B cell (primary cell): ENCODE measurements at regions of chr1 and their contacts with region 1.

Region 1: GRCh38 chr1:192580351-192580962 is 4.9 kb downstream of the RGS1 start:
- DNase-seq: peak; percentile 55
- ATAC-seq: no peak
- H3K4me3 ChIP-seq: no peak overlapping the region
- H3K4me3 Mint-ChIP-seq: peak overlapping the region; percentile 73
- H3K27ac ChIP-seq: no peak overlapping the region
- H3K27ac Mint-ChIP-seq: no peak overlapping the region
- H3K4me1 ChIP-seq: peaks cover 11 to 13% of the 10 kb centered on the region in 2 donors
- H3K4me1 Mint-ChIP-seq: peaks cover 38% of the 10 kb centered on the region
- H3K27me3 ChIP-seq: peaks cover 0 to 5% (median 0%) of the 10 kb centered on the region in 4 experiments
- H3K27me3 Mint-ChIP-seq: peaks cover 6% of the 10 kb centered on the region
- CTCF ChIP-seq: peak; percentile 31

Region 2: GRCh38 chr1:192100690-192101468 is 479.6 kb before region 1 on chr1:
- CTCF ChIA-PET with region 1: no interaction called
- POLR2A ChIA-PET with region 1: no interaction called
- intact Hi-C with region 1: no loop called
- DNase-seq: no peak
- ATAC-seq: no peak
- H3K4me3 ChIP-seq: no peak overlapping the region
- H3K4me3 Mint-ChIP-seq: no peak overlapping the region
- H3K27ac ChIP-seq: no peak overlapping the region
- H3K27ac Mint-ChIP-seq: no peak overlapping the region
- H3K4me1 ChIP-seq: no peaks in the 10 kb centered on the region
- H3K4me1 Mint-ChIP-seq: no peaks in the 10 kb centered on the region
- H3K27me3 ChIP-seq: no peaks in the 10 kb centered on the region
- H3K27me3 Mint-ChIP-seq: no peaks in the 10 kb centered on the region
- CTCF ChIP-seq: no peak

Region 3: GRCh38 chr1:192506741-192507155 is 73.7 kb before region 1 on chr1:
- CTCF ChIA-PET with region 1: interaction called, 22 read pairs
- POLR2A ChIA-PET with region 1: no interaction called
- intact Hi-C with region 1: loop called (anchors 2 kb)
- DNase-seq: peak; percentile 31
- ATAC-seq: peak; percentile 66
- H3K4me3 ChIP-seq: no peak overlapping the region
- H3K4me3 Mint-ChIP-seq: no peak overlapping the region
- H3K27ac ChIP-seq: no peak overlapping the region
- H3K27ac Mint-ChIP-seq: no peak overlapping the region
- H3K4me1 ChIP-seq: no peaks in the 10 kb centered on the region
- H3K4me1 Mint-ChIP-seq: no peaks in the 10 kb centered on the region
- H3K27me3 ChIP-seq: peaks cover 0 to 3% (median 0%) of the 10 kb centered on the region in 4 experiments
- H3K27me3 Mint-ChIP-seq: peaks cover 10% of the 10 kb centered on the region
- CTCF ChIP-seq: no peak

Region 4: DNA sequence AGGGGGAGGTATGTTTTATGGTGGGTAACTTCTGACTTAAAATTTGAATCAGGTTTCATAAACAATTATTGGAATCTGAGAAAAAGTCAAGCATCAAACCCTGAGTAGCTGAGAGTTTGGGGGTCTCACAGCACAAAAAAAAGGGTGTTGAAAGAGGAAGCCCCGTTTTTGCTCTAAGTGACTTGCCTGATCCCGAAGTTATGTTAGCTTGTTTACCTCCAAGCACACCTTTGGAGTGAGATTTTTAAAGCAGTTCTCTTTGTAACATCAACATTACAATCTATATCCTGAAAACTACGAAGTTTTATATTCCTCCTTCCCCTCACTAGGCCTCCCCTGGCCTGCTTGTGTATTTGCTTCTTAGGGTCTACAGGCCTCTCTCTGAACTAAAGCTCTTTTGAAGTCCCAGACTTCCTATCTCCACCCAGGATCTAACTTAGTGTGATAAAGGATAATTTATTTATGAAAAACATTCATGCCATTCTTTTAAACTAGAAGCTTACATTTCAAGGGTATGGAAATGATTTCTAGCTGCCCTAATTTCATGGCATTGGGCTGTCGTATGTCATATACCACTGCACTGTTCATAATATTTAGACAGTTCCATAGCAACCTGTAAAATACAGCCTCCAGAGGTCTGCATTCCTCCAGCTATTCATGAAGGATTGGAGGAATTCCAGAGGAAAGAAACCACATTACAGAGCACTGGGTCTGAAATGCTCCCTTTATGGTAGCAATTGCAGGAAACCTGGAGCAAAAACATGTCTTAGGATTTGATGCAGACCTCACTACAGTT is 41.0 kb before region 1 on chr1:
- CTCF ChIA-PET with region 1: interaction called, 6 read pairs
- POLR2A ChIA-PET with region 1: interaction called, 5 read pairs
- intact Hi-C with region 1: loop called (anchors 1 kb)
- DNase-seq: peak; percentile 25
- ATAC-seq: peak; percentile 16
- H3K4me3 ChIP-seq: no peak overlapping the region
- H3K4me3 Mint-ChIP-seq: peak overlapping the region; percentile 18
- H3K27ac ChIP-seq: peak overlapping the region in 1 of 2 donors; percentile 36
- H3K27ac Mint-ChIP-seq: peak overlapping the region; percentile 8
- H3K4me1 ChIP-seq: peaks cover 13 to 16% of the 10 kb centered on the region in 2 donors
- H3K4me1 Mint-ChIP-seq: peaks cover 35% of the 10 kb centered on the region
- H3K27me3 ChIP-seq: peaks cover 0 to 9% (median 0%) of the 10 kb centered on the region in 4 experiments
- H3K27me3 Mint-ChIP-seq: no peaks in the 10 kb centered on the region
- CTCF ChIP-seq: no peak

Region 5: DNA sequence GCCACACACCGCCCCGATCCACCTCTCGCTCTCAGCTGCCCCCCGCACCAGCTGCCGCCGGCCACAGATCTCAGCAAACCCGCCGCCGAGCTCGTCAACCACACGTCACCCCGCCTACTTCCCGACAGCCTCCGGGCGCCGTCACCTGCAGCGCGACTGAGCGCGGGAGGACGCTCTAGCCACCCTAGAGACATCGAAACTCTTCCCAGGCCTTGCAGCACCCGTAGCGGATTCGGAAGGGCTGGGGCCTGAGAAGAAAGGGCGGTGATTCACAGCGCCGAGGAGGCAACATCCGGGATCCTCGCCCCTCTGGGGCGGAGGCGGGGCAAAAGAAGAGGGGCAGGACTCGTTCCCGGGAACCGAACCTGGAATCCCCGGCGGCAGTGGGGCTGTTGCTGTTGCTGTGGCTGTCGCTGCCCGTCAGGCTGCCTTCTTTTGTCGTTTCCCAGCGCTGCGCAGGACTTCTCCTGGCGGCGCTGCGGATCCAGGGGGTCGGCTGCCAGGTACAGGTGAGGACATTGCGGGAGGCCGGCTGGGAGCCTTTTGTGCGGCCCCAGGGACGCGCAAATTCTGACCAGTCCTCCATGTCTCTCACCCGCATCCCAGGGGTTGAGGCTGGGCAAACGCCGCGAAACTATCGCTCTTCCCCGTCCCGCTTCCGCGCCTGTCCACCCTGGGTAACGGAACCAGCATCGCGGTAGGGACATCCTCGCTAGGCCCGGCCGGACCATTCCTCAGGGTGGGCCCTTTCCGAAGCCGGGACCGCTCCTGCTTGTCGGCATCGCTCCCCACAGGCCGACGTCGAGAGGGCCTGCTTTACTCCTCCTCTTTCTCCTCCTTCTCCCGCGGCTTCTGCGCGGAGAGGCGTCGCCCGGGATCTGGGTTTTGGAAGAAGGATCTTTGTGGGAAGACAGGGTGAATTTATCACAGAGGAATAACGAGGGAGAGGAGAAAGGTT is 479.1 kb after region 1 on chr1 and contains the starts of genes RO60 and UCHL5:
- CTCF ChIA-PET with region 1: no interaction called
- POLR2A ChIA-PET with region 1: no interaction called
- intact Hi-C with region 1: loop called (anchors 2 kb)
- DNase-seq: peak; percentile 96
- ATAC-seq: peak; percentile 95
- H3K4me3 ChIP-seq: peak within 1 kb of the TSS; percentile 62 to 99 (median 91)
- H3K4me3 Mint-ChIP-seq: peak within 1 kb of the TSS; percentile 98
- H3K27ac ChIP-seq: peak within 1 kb of the TSS; percentile 89 to 94
- H3K27ac Mint-ChIP-seq: peak within 1 kb of the TSS; percentile 99
- H3K4me1 ChIP-seq: peaks cover 21 to 25% of the 10 kb centered on the region in 2 donors
- H3K4me1 Mint-ChIP-seq: peaks cover 51% of the 10 kb centered on the region
- H3K27me3 ChIP-seq: no peaks in the 10 kb centered on the region
- H3K27me3 Mint-ChIP-seq: no peaks in the 10 kb centered on the region
- CTCF ChIP-seq: no peak
- total RNA-seq, gene RO60: 66.4 and 78.2 TPM in 2 replicates
- total RNA-seq, gene UCHL5: 31.5 and 32.9 TPM in 2 replicates